Pancreas (tissue), 10 donors: ENCODE measurements at regions of chr12 and their contacts with region 1.

Region 1: DNA sequence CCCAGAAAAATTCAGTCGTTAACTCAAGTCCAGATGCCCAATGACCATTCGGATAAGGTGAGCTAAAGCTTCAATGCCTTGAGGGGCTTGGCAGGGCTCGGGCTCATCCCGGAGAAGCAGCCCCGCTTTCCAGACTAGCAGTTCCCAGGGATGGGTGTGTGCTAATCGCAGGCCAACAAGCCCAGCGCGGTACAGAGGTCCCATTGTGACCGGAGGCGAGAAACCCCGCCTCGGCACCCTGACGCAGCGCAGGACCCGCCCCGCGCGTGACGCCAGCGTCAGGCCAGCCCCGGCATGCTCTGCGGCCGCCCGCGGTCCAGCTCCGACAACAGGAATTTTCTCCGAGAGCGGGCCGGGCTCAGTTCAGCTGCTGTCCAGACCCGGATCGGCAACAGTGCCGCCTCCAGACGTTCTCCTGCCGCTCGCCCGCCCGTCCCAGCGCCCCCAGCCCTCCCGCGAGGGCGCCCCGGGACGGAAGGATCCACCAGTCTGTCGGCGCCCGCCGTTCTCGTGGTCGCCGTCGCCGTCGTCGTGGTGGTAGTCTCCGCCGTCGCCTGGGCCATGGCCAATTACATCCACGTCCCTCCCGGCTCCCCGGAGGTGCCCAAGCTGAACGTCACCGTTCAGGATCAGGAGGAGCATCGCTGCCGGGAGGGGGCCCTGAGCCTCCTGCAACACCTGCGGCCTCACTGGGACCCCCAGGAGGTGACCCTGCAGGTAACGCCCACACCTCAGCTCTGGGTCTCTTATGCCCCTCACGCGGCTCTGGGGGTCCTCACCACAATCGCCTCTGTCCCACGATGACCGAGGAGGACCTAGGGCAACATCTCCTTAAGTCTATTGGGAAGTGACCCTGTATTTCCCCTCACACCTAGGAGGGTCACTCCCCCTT is at the start of gene ETNK1:
- DNase-seq: peak; percentile 91 to 97 (median 94)
- ATAC-seq: peak; percentile 98 to 100 (median 99)
- H3K4me3 ChIP-seq: peak within 1 kb of the TSS; percentile 80 to 92 (median 88)
- H3K27ac ChIP-seq: peak within 1 kb of the TSS; percentile 97 to 99 (median 98)
- H3K4me1 ChIP-seq: peaks cover 2 to 42% (median 38%) of the 10 kb centered on the region in 3 donors
- H3K27me3 ChIP-seq: no peaks in the 10 kb centered on the region
- CTCF ChIP-seq: no peak
- total RNA-seq, gene ETNK1: 17.7 to 44.7 (median 23.8) TPM

Region 2: DNA sequence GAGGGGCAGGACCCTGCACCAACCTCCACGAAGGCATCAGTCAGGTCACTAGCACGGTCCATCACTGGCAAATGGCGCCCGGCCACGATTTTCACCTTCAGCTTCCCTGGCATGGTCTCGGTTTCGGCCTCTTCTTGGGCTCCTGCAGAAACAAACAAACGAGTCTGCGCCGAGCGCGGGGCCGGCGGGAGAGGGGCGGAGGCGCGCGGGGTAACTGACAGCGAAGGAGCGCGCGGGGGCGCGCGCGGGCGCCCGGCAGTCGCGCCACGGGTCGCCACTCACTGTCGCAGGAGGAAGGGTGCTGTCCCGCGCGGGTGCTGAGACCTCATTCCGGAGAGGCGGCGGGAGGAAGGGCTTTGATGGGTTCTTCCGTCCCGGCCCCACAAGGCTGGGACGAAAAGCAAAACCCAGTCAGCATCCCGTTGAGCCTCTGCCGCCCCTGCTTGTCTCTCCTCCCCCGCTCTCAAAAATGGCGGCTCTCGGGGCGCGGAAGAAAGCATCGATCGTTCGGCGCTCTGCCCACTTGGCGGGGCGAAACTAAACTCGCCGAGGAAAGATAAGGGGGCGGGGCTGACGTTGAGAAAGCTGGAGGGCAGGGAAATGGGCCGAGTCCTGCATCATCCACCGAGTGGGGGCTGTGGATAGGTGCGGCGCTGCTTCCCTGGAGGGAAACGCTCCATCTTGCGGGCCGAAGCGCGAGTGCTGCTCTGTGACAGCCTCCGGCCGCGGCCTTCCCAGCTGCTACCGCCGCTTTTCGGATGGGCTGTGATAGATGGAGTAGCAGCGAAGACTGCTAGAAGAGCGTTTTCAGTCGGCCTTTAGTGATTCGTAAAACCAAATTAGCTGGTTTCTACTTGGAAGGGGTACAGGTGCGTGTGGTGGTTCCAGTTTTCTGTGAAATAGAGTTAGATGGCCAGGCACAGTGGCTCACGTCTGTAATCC is 80.8 kb before region 1 on chr12 and contains the start of gene C2CD5:
- intact Hi-C with region 1: loop called in 2 of 3 experiments (anchors 10 kb)
- DNase-seq: peak; percentile 91 to 98 (median 97)
- ATAC-seq: peak; percentile 91 to 95 (median 93)
- H3K4me3 ChIP-seq: peak within 1 kb of the TSS; percentile 64 to 79 (median 70)
- H3K27ac ChIP-seq: peak within 1 kb of the TSS; percentile 82 to 96 (median 91)
- H3K4me1 ChIP-seq: peaks cover 0 to 16% (median 0%) of the 10 kb centered on the region in 3 donors
- H3K27me3 ChIP-seq: no peaks in the 10 kb centered on the region
- CTCF ChIP-seq: peak in 1 of 4 donors; percentile 15
- total RNA-seq, gene C2CD5: 12.1 to 26.3 (median 16.1) TPM

Region 3: GRCh38 chr12:22722779-22723178 is 97.7 kb after region 1 on chr12:
- intact Hi-C with region 1: no loop called
- DNase-seq: no peak
- ATAC-seq: no peak
- H3K4me3 ChIP-seq: no peak overlapping the region
- H3K27ac ChIP-seq: no peak overlapping the region
- H3K4me1 ChIP-seq: no peaks in the 10 kb centered on the region
- H3K27me3 ChIP-seq: no peaks in the 10 kb centered on the region
- CTCF ChIP-seq: no peak